ENCODE measurements at regions of chr3 and their contacts with region 1.

Region 1: DNA sequence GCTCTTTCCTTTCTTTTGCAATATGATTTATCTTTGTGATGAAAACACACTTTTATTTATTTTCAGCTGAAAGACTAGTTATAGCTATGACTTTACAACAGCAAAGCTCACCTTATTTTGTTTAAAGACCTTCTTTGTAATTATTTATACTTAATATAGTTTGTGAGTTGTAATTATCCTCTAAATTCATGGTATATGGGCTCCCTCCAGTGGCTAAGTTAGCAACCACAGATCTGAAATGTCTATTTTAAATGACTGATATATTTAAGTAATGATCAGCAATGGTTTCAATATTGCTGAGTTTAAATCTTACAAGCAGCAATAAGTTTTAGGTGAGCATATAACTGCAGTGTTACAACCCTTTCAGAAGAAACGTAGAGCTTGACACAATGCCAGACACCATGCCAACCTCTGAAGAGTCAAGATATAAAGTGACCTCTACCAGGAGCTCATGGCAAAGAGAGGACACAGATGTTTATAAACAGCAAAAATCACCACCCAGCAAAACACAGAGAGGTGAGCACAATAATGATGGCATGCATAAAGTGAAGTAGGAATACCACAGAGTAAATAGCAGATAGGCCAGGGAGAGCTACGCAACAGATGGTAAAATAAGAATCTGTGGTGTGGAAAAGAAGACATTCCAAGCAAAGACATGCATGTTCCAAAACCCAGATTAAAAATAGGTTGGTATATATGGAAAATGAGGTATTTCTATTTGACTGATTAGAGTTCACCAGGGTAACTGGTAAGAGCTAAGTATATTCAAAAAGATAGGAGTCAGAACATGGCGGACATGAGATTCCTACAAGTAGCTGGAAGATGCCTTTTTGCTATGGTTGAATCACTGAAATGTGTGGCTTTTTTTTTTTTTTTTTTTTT is 143.7 kb upstream of the ZNF385D start:
- DNase-seq: no peak
- H3K4me3 ChIP-seq: no peak overlapping the region
- H3K27ac ChIP-seq: no peak overlapping the region
- H3K4me1 ChIP-seq: no peaks in the 10 kb centered on the region
- H3K27me3 ChIP-seq: no peaks in the 10 kb centered on the region
- CTCF ChIP-seq: peak; percentile 59

Region 2: GRCh38 chr3:20225769-20226168 is 1668.9 kb before region 1 on chr3:
- CTCF ChIA-PET with region 1: no interaction called
- dilution Hi-C with region 1: no loop called
- in situ Hi-C with region 1: no loop called
- intact Hi-C with region 1: loop called (anchors 2 kb)
- DNase-seq: peak; percentile 26
- H3K4me3 ChIP-seq: no peak overlapping the region
- H3K27ac ChIP-seq: no peak overlapping the region
- H3K4me1 ChIP-seq: no peaks in the 10 kb centered on the region
- H3K27me3 ChIP-seq: peaks cover 3% of the 10 kb centered on the region
- CTCF ChIP-seq: peak; percentile 49 to 53

Region 3: GRCh38 chr3:22627993-22628499 is 733.3 kb after region 1 on chr3:
- CTCF ChIA-PET with region 1: no interaction called
- dilution Hi-C with region 1: no loop called
- in situ Hi-C with region 1: no loop called
- intact Hi-C with region 1: no loop called
- DNase-seq: no peak
- H3K4me3 ChIP-seq: no peak overlapping the region
- H3K27ac ChIP-seq: no peak overlapping the region
- H3K4me1 ChIP-seq: no peaks in the 10 kb centered on the region
- H3K27me3 ChIP-seq: no peaks in the 10 kb centered on the region
- CTCF ChIP-seq: no peak